Activated CD8-positive, alpha-beta T cell treated with anti-CD3 and anti-CD28 coated beads, Interleukin-2, amount 10 ng/mL, durations not matched to agents 7 days and 5 days (primary cell): ENCODE measurements at regions of chr19 and their contacts with region 1.

Region 1: DNA sequence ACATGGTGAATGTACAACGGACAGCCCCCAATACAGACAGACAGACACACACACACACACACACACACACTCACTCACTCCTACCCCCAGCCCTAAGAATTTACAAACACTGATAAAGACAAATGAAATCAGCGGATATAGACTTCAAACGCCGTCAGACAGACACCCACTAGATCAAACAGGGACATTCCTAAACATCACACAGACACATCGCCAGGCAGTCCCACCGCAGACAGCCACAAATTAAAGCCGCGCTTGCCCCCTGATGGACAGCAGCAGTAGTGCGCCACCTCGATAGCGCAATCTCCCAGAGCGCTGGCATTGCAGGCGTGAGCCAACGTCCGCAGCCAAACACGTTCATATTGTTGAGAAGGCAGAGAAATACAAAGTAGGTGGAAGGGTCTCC is 24.7 kb upstream of the ADGRE1 start:
- DNase-seq: peak; percentile 94
- ATAC-seq: peak; percentile 82
- H3K4me3 Mint-ChIP-seq: peak overlapping the region; percentile 77
- H3K27ac Mint-ChIP-seq: peak overlapping the region; percentile 71
- H3K4me1 Mint-ChIP-seq: peaks cover 23% of the 10 kb centered on the region
- H3K27me3 Mint-ChIP-seq: no peaks in the 10 kb centered on the region

Region 2: DNA sequence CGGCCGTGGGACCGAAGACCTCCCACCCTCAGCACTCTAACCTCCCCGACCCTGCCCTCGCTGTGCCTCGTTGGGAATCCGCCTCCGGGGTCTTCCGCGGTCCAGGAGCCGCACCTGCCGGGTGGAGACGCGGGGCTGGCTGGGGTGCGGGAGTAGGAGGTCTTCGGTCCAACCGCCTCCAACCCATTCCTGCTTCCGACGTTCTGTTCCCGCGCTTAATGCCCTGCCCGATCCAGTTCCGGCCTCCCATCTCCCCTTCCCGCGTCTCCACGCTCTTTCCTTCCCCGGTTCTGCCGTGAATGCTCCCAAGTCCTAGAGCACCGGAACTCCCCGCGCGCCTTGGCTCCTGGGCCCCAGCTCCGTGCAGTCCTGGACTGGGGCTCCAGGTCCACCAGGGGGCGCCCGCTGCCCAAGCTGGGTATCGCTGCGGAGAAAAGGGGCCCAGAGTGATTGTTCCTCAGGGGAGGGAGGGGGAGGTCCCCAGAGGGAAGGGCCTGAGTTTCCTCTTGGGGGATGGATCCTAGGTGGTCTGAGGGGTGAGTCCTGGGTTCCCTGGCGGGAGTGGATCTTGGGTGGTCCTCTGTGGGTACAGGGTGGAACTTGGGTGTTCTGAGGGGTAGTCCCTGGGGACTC is 345.9 kb before region 1 on chr19:
- CTCF ChIA-PET with region 1: interaction called, 29 read pairs
- POLR2A ChIA-PET with region 1: interaction called, 7 read pairs
- DNase-seq: peak; percentile 94
- ATAC-seq: peak; percentile 87
- H3K4me3 Mint-ChIP-seq: peak overlapping the region; percentile 93
- H3K27ac Mint-ChIP-seq: peak overlapping the region; percentile 93
- H3K4me1 Mint-ChIP-seq: peaks cover 32% of the 10 kb centered on the region
- H3K27me3 Mint-ChIP-seq: no peaks in the 10 kb centered on the region

Region 3: DNA sequence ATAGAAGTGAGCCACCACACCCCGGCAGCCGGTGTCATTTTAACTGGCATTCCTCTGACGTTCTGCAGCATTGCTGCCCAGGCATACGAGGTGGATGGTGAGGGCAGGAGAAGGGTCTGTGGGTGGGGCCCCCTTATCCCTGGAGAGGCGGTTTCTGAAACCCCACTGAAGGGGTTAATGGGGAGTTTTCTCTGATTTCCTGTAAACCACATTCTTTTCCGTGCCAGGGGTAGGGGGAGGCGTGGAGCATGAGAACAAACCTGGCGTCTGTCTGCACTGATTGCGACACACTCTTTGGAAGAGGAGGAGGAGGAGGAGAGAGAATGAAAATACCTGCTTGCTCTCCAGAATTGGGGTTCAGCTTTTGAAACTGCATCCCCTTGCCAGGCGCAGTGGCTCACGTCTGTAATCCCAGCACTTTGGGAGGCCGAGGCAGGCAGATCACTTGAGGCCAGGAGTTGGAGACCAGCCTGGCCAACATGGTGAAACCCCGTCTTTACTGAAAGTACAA is 139.5 kb before region 1 on chr19:
- CTCF ChIA-PET with region 1: interaction called, 10 read pairs
- POLR2A ChIA-PET with region 1: no interaction called
- DNase-seq: no peak
- ATAC-seq: no peak
- H3K4me3 Mint-ChIP-seq: no peak overlapping the region
- H3K27ac Mint-ChIP-seq: no peak overlapping the region
- H3K4me1 Mint-ChIP-seq: peaks cover 53% of the 10 kb centered on the region
- H3K27me3 Mint-ChIP-seq: no peaks in the 10 kb centered on the region

Region 4: DNA sequence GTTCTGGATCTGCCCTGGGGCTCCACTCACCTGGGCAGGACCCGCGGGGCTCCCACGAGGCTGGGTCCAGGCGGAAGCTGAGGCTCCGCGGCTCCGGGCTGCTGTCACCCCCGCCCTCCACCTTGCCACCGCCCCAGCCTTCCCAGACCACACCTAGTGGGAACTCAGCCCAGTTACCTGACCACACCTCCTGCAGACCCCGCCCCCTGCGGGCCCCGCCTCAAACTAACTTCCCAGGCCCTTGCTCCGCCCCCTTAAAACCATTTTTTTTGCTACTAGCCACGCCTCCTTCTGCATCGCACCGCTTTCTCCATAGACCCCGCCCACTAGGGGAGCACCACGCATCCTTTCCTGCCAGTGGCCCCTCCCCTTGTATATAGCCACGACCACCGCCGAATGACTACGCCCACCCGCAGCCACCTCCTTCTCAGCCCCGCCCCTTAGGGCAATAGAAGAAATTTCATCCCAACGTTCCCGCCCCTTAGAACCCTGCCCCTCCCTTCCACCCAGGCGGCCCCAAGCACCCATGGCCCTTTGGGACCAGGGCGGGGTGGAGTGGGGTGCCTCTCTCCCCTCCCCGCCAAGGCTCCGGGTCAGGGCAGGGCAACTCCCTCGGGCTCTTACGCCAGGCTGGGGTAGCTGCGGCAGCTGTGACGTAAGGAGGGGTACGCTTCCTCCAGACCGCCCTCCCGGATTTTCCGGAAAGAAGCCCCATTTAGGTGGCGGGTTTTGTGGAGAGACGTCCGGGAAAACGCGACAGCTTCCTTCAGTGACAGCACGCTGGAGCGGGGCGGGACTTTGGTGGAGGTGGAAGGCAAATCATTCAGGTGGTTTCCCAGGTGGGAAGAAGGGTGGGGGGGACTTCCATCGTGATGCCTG is 95.1 kb before region 1 on chr19 and contains the start of gene SH2D3A:
- CTCF ChIA-PET with region 1: interaction called, 31 read pairs
- POLR2A ChIA-PET with region 1: interaction called, 6 read pairs
- DNase-seq: peak; percentile 97
- ATAC-seq: peak; percentile 79
- H3K4me3 Mint-ChIP-seq: peak within 1 kb of the TSS; percentile 88
- H3K27ac Mint-ChIP-seq: peak within 1 kb of the TSS; percentile 91
- H3K4me1 Mint-ChIP-seq: peaks cover 60% of the 10 kb centered on the region
- H3K27me3 Mint-ChIP-seq: no peaks in the 10 kb centered on the region
- total RNA-seq, gene SH2D3A: 28.2 to 28.5 TPM

Region 5: DNA sequence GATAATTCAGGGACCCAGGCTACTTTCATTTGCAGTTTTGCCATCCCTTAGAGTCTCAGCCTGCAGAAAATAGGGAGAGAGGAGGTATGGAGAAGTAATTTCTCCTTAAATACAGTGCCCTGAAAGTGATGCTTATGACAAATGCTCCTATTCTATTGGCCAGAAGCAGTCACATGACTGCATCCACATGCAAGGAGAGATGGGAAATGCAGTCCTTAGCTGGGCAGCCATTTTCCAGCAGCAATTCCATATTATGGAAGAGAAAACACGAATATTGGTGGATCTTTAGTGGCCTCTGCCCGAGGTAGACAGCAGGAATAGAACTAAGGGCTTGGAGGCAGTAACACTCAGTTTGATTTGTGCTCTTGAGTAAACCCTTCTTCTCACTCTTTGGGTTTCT is 50.8 kb before region 1 on chr19:
- CTCF ChIA-PET with region 1: interaction called, 10 read pairs
- POLR2A ChIA-PET with region 1: interaction called, 3 read pairs
- DNase-seq: no peak
- ATAC-seq: no peak
- H3K4me3 Mint-ChIP-seq: no peak overlapping the region
- H3K27ac Mint-ChIP-seq: peak overlapping the region; percentile 16
- H3K4me1 Mint-ChIP-seq: peaks cover 64% of the 10 kb centered on the region
- H3K27me3 Mint-ChIP-seq: no peaks in the 10 kb centered on the region

Region 6: DNA sequence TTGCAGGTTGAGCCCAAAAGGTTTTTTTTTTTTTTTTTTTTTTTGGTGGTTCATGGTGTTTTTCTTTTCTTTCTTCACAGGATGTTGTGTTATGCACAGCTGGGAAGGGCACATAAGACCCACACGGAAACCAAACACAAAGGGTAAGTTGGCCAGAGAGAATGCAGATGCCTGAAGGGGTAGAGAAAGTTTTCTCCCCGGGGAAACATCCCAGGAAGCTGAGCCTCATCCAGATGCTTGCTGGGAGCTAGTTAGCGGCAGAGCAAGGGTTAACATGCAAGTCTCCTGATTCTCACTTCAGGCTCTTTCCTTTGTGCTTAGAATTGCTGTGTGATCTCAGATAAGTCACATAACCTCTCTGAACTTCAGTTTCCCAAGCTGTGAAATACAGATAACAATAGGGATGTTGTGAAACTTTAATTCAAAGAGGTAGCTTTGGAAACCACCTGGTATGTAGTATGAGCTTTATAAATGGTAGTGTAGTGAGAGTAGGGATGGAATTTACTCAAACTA is 27.8 kb after region 1 on chr19:
- CTCF ChIA-PET with region 1: interaction called, 10 read pairs
- POLR2A ChIA-PET with region 1: interaction called, 4 read pairs
- DNase-seq: peak; percentile 37
- ATAC-seq: peak; percentile 48
- H3K4me3 Mint-ChIP-seq: peak overlapping the region; percentile 30
- H3K27ac Mint-ChIP-seq: peak overlapping the region; percentile 87
- H3K4me1 Mint-ChIP-seq: peaks cover 58% of the 10 kb centered on the region
- H3K27me3 Mint-ChIP-seq: no peaks in the 10 kb centered on the region

Region 7: GRCh38 chr19:6903452-6903851 is 40.8 kb after region 1 on chr19:
- CTCF ChIA-PET with region 1: no interaction called
- POLR2A ChIA-PET with region 1: no interaction called
- DNase-seq: no peak
- ATAC-seq: no peak
- H3K4me3 Mint-ChIP-seq: no peak overlapping the region
- H3K27ac Mint-ChIP-seq: no peak overlapping the region
- H3K4me1 Mint-ChIP-seq: no peaks in the 10 kb centered on the region
- H3K27me3 Mint-ChIP-seq: no peaks in the 10 kb centered on the region

Region 8: DNA sequence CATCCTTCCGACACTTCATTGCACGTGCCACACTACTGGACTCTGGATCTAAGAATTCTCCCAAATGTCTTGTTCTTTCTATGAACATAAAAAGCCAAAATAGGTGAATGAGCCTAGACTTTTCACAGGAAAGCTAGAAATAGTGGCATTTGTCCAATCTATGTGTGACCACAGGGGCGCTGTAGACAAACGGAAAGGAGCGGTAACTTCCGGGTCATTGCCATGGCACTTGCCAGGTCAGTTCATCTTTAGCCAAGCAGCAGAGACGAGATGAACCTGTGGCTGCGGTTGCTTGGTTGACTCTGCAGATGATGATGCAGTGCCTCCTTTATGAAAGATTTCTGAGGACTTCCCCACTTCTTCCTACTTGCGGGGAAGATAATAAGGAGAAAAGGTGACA is 90.3 kb after region 1 on chr19:
- CTCF ChIA-PET with region 1: no interaction called
- POLR2A ChIA-PET with region 1: no interaction called
- DNase-seq: no peak
- ATAC-seq: no peak
- H3K4me3 Mint-ChIP-seq: no peak overlapping the region
- H3K27ac Mint-ChIP-seq: no peak overlapping the region
- H3K4me1 Mint-ChIP-seq: peaks cover 6% of the 10 kb centered on the region
- H3K27me3 Mint-ChIP-seq: peaks cover 3% of the 10 kb centered on the region

Region 9: GRCh38 chr19:7013678-7014077 is 151.0 kb after region 1 on chr19:
- CTCF ChIA-PET with region 1: no interaction called
- POLR2A ChIA-PET with region 1: no interaction called
- DNase-seq: peak; percentile 26
- ATAC-seq: no peak
- H3K4me3 Mint-ChIP-seq: no peak overlapping the region
- H3K27ac Mint-ChIP-seq: no peak overlapping the region
- H3K4me1 Mint-ChIP-seq: peaks cover 28% of the 10 kb centered on the region
- H3K27me3 Mint-ChIP-seq: no peaks in the 10 kb centered on the region